Transverse colon (tissue), 4 donors: ENCODE measurements at regions of chr16 and their contacts with region 1.

Region 1: DNA sequence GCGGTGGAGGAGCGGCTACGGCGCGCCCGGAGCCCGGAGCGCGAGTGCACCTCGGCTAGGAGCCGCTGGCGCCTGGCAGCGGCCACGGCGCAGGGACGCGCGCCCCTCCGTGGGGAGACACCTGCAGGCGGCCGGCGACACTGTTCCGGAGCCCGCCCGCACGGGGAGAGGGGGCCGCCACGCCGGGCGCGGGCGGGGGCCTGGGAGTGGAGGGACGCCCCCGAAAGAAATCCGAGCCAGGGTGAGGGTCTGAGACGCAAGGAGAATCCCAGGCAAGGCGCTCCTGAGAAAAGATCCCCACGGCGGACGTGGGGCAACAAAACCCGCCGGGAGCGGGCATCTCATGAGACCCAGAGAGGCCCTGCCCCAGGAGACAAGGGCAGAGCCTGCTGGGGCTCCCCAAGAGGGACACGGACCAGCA is at the start of gene GSG1L:
- DNase-seq: no peak
- H3K4me3 ChIP-seq: peak within 1 kb of the TSS in 2 of 4 donors; percentile 21 to 42
- H3K27ac ChIP-seq: no peak within 1 kb of the TSS
- H3K4me1 ChIP-seq: peaks cover 0 to 5% (median 0%) of the 10 kb centered on the region in 4 donors
- H3K27me3 ChIP-seq: peaks cover 61% of the 10 kb centered on the region
- CTCF ChIP-seq: no peak
- EP300 ChIP-seq: no peak
- POLR2A ChIP-seq: no peak
- total RNA-seq, gene GSG1L: not detected

Region 2: DNA sequence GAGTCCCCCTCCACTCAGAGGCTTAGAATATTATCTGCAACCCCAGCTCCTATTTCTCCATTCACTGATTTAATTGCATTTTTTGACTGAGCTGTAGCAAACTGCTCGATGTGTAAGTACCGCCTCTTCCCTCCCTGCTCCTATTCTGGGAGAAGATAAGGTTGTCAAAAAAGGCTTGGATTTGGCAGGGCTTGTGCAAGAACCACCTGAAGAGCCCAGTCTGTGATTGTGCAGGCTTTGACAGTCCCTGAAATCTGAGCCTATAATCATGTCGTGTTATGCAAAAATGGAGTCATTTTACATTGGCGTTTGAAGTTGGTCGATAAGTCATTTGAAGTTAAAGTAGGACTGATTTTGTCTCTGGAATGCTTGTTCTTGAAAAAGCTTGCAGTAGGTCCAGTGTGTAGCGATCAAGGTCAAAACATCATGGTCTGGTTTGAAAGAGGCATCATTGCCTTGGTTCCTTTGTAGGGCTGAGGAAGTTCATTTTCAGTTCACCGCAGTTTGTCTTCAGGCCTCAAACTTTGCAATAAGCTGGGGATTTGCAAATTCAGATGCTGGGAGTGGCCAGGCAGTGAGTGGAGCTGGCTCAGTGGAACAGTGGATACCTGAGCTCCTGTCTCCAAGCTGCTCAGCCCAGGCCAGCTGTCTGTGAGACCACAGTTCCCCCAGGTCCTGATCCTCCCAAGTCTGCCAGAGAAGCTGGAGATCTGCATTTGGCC is 444.9 kb before region 1 on chr16:
- in situ Hi-C with region 1: loop called in 2 of 4 experiments (anchors 25 kb)
- intact Hi-C with region 1: no loop called
- DNase-seq: no peak
- H3K4me3 ChIP-seq: no peak overlapping the region
- H3K27ac ChIP-seq: no peak overlapping the region
- H3K4me1 ChIP-seq: peaks cover 0 to 3% (median under 1%) of the 10 kb centered on the region in 4 donors
- H3K27me3 ChIP-seq: no peaks in the 10 kb centered on the region
- CTCF ChIP-seq: no peak
- EP300 ChIP-seq: no peak
- POLR2A ChIP-seq: no peak